ENCODE measurements at regions of chr11 and their contacts with region 1.

Region 1: GRCh38 chr11:11036848-11037732 is 179.2 kb upstream of the ZBED5 start:
- DNase-seq: peak in 5 of 9 experiments; percentile 27 to 81 (median 51)
- ATAC-seq: peak; percentile 91
- H3K4me3 ChIP-seq: no peak overlapping the region
- H3K4me3 Mint-ChIP-seq: no peak overlapping the region
- H3K27ac ChIP-seq: no peak overlapping the region
- H3K27ac Mint-ChIP-seq: peak overlapping the region; percentile 74
- H3K4me1 ChIP-seq: peaks cover 16% of the 10 kb centered on the region
- H3K4me1 Mint-ChIP-seq: peaks cover 16% of the 10 kb centered on the region
- H3K27me3 ChIP-seq: no peaks in the 10 kb centered on the region
- H3K27me3 Mint-ChIP-seq: peaks cover 3% of the 10 kb centered on the region
- CTCF ChIP-seq: peak; percentile 61

Region 2: DNA sequence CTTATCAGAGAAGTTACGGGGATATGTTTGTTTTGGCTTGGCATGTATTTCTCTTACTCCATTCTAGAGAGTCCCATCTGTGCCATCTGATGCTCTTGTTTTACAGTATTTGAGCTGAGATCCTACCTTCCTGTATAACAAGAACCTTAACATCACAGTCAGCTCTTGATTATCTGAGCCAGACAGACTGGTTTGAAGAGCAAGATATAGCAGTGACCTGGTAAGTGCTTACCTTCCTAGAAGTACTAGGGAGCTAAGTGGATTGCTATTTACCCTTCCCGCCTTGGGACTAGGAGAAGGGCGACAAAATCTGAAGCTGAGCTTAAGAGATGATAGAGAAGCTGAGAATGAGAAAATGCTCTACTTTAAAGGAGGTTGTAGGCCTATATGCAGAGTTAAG is 80.6 kb after region 1 on chr11:
- CTCF ChIA-PET with region 1: no interaction called
- POLR2A ChIA-PET with region 1: no interaction called
- intact Hi-C with region 1: no loop called
- DNase-seq: no peak
- ATAC-seq: no peak
- H3K4me3 ChIP-seq: no peak overlapping the region
- H3K4me3 Mint-ChIP-seq: no peak overlapping the region
- H3K27ac ChIP-seq: no peak overlapping the region
- H3K27ac Mint-ChIP-seq: no peak overlapping the region
- H3K4me1 ChIP-seq: no peaks in the 10 kb centered on the region
- H3K4me1 Mint-ChIP-seq: peaks cover 1% of the 10 kb centered on the region
- H3K27me3 ChIP-seq: no peaks in the 10 kb centered on the region
- H3K27me3 Mint-ChIP-seq: no peaks in the 10 kb centered on the region
- CTCF ChIP-seq: no peak

Region 3: DNA sequence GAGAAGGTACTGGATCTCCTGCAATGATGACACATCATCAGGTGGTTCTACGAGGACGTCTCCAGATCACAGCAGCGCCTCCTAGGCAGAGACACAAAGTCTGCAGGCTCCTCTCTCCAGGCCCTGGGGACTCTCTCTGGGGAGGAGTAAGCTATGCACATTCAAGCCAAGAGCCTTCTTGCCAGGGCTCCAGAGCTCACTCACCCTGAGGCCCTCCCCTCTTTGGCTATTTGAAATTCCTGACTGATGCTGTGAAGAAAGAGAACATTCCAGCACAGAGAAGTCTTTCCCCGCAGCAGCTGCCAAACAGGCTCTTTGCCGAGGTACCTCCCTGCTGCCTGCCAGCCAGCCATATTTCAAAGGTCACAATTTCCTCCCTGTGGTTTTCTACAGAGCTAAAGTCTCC is 111.0 kb after region 1 on chr11:
- CTCF ChIA-PET with region 1: interaction called, 31 read pairs
- POLR2A ChIA-PET with region 1: interaction called, 8 read pairs
- intact Hi-C with region 1: no loop called
- DNase-seq: peak in 4 of 9 experiments; percentile 26 to 52 (median 38)
- ATAC-seq: no peak
- H3K4me3 ChIP-seq: no peak overlapping the region
- H3K4me3 Mint-ChIP-seq: no peak overlapping the region
- H3K27ac ChIP-seq: no peak overlapping the region
- H3K27ac Mint-ChIP-seq: peak overlapping the region; percentile 79
- H3K4me1 ChIP-seq: peaks cover 42% of the 10 kb centered on the region
- H3K4me1 Mint-ChIP-seq: peaks cover 42% of the 10 kb centered on the region
- H3K27me3 ChIP-seq: no peaks in the 10 kb centered on the region
- H3K27me3 Mint-ChIP-seq: no peaks in the 10 kb centered on the region
- CTCF ChIP-seq: no peak

Region 4: GRCh38 chr11:11157185-11157584 is 120.1 kb after region 1 on chr11:
- CTCF ChIA-PET with region 1: interaction called, 236 read pairs
- POLR2A ChIA-PET with region 1: interaction called, 12 read pairs
- intact Hi-C with region 1: loop called (anchors 1 kb)
- DNase-seq: peak; percentile 37 to 78 (median 70)
- ATAC-seq: peak; percentile 74
- H3K4me3 ChIP-seq: no peak overlapping the region
- H3K4me3 Mint-ChIP-seq: no peak overlapping the region
- H3K27ac ChIP-seq: no peak overlapping the region
- H3K27ac Mint-ChIP-seq: peak overlapping the region; percentile 94
- H3K4me1 ChIP-seq: peaks cover 23% of the 10 kb centered on the region
- H3K4me1 Mint-ChIP-seq: peaks cover 22% of the 10 kb centered on the region
- H3K27me3 ChIP-seq: no peaks in the 10 kb centered on the region
- H3K27me3 Mint-ChIP-seq: no peaks in the 10 kb centered on the region
- CTCF ChIP-seq: peak; percentile 61

Region 5: DNA sequence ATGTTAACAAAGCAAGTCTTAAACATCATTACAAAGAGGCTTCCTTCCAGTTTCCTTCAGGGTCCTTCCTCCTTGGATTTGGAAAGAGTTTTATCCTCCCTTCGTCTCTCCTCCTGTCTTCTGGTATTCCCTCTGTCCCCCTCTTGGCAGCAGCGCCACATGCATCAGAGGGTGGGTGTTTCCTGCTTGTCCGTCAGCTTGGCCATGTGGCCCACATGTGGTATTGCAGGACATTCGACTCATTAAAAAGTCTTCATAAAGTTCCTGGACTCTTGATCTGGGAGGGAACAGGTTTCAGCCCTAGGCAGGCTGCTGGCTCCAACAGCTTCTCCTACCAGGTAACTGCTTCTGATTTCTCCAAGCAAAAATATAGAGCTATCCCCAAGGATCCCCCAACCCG is 126.1 kb after region 1 on chr11:
- CTCF ChIA-PET with region 1: interaction called, 236 read pairs
- POLR2A ChIA-PET with region 1: interaction called, 12 read pairs
- intact Hi-C with region 1: no loop called
- DNase-seq: no peak
- ATAC-seq: no peak
- H3K4me3 ChIP-seq: no peak overlapping the region
- H3K4me3 Mint-ChIP-seq: no peak overlapping the region
- H3K27ac ChIP-seq: no peak overlapping the region
- H3K27ac Mint-ChIP-seq: no peak overlapping the region
- H3K4me1 ChIP-seq: no peaks in the 10 kb centered on the region
- H3K4me1 Mint-ChIP-seq: no peaks in the 10 kb centered on the region
- H3K27me3 ChIP-seq: no peaks in the 10 kb centered on the region
- H3K27me3 Mint-ChIP-seq: no peaks in the 10 kb centered on the region
- CTCF ChIP-seq: no peak

Region 6: DNA sequence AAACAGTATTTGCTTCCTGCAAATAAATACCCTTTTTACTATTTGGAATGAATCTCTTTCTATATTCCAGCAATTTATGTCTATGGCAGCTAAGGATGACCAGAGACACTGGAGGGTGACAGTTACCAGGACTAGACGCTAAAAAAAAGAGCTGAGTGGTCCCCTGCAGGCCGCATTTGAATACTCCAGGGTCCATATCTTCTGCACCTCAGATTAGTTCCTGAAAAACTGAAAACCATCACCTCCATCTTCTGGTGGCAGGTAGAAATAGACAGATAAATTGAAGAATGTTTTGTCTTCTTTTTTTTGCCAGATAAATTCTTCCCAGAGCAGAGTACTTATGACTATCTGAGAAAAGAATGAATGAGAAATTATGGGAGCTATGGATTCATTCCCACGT is 170.3 kb after region 1 on chr11:
- CTCF ChIA-PET with region 1: interaction called, 4 read pairs
- POLR2A ChIA-PET with region 1: no interaction called
- intact Hi-C with region 1: loop called (anchors 1 to 2 kb)
- DNase-seq: peak in 2 of 9 experiments; percentile 26 to 27
- ATAC-seq: no peak
- H3K4me3 ChIP-seq: no peak overlapping the region
- H3K4me3 Mint-ChIP-seq: no peak overlapping the region
- H3K27ac ChIP-seq: no peak overlapping the region
- H3K27ac Mint-ChIP-seq: no peak overlapping the region
- H3K4me1 ChIP-seq: no peaks in the 10 kb centered on the region
- H3K4me1 Mint-ChIP-seq: no peaks in the 10 kb centered on the region
- H3K27me3 ChIP-seq: peaks cover 3% of the 10 kb centered on the region in 2 experiments
- H3K27me3 Mint-ChIP-seq: peaks cover 23% of the 10 kb centered on the region
- CTCF ChIP-seq: no peak

Region 7: DNA sequence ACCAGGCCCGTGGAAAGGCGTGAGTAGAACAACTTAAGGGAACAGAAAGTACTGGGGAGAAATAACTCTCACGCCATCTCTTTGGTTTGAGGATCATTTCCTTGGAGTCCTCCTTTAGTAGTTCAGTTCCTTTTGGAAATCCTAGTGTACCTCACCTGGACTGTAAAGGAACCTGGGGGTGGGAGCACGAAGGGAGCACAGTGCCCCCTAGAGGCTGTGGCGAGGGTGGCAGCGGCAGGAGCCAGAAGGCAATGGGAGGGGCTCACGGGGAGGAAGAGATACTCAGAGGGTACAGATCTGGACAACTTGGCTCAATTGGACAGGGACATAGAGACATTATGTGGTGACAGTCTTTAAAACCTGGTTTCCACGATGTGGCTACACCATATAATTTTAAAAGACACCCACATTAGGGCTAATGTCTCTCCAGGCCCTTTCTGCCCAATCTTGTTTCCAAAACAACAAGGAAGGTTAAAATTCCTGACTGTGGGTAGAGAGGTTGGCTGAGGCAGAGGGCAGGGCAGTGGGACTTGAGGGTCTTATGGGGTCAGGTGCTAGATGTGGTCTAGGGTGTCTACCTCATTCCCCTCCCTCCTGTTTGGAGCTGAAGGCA is 229.0 kb after region 1 on chr11:
- CTCF ChIA-PET with region 1: no interaction called
- POLR2A ChIA-PET with region 1: no interaction called
- intact Hi-C with region 1: loop called in 1 of 2 experiments (anchors 2 kb)
- DNase-seq: peak; percentile 24 to 63 (median 50)
- ATAC-seq: peak; percentile 63
- H3K4me3 ChIP-seq: no peak overlapping the region
- H3K4me3 Mint-ChIP-seq: no peak overlapping the region
- H3K27ac ChIP-seq: no peak overlapping the region
- H3K27ac Mint-ChIP-seq: no peak overlapping the region
- H3K4me1 ChIP-seq: no peaks in the 10 kb centered on the region
- H3K4me1 Mint-ChIP-seq: no peaks in the 10 kb centered on the region
- H3K27me3 ChIP-seq: no peaks in the 10 kb centered on the region
- H3K27me3 Mint-ChIP-seq: peaks cover 12% of the 10 kb centered on the region
- CTCF ChIP-seq: peak; percentile 45

Measured in CD8-positive, alpha-beta T cell (primary cell).